ENCODE measurements at regions of chr18 and their contacts with region 1.

Region 1: DNA sequence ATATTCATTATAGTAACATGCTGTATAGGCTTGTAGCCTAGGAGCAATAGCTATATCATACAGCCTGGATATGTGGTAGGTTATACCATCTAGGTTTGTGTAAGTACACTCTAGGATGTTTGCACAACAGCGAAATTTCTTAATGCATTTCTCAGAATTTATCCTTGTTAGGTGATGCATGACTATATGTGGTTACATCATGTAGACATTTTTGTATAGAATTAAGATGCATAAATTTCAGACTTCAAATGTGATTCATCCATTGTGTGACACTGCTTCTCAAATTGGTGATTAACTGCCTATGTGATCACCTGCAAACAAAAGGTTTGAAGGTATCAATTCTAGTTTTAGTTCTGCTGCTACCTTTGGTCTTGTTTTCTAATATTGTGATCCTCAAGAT is 1787.0 kb upstream of the PIK3C3 start:
- DNase-seq: no peak
- CTCF ChIP-seq: no peak

Region 2: DNA sequence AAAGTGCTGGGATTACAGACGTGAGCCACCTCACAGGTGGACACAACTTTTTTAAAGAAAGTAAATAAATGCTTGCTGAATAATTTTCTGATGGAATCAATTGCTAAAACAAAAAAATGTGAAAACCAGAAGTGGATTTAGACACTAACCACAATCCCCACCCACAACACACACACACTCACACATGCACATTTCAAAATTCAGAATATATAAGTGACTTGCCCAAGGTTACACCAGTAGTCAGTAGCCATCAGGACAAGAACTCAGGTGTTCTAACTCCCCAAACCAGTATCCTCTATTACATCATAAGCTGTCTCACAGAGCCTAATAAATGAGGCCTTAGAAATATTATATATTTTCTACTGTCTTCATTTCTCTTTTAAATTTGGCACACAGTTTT is 136.6 kb before region 1 on chr18:
- CTCF ChIA-PET with region 1: no interaction called
- POLR2A ChIA-PET with region 1: no interaction called
- DNase-seq: no peak
- CTCF ChIP-seq: no peak

Region 3: DNA sequence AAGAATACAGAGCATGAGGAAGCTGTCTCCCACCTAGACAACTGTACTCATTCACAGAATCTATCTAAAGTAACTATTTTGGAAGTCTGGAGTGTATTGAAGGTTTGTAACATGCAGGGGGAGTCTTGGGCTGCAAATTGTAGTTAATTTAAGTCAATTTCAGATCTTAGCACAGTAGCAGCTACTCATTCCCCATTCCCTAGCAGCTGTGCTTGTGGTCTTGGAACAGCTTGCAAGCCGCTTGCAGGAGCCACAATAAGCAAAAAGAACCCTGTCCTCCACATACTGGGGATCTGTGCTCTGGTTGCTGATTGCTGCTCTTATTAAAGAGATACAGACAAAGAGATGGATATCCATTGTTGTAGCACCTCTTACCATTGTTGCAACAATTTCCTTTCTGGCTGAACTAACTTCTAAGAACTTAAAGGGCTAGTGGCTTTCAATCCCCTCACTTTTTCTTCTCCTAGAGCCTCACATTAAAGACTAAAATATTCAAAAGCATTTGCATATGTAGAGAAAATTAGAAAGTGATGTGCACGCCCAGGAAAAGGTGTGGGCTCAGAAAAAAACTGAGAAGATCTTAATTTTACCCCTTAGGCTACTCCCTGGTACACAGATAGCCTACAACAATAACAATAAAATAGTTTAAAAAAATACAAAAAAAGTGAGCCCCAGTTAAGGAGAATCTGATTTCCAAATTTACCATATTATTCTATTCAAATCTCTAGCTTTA is 11.9 kb after region 1 on chr18:
- CTCF ChIA-PET with region 1: interaction called, 11 read pairs
- POLR2A ChIA-PET with region 1: no interaction called
- DNase-seq: no peak
- CTCF ChIP-seq: no peak